ENCODE measurements at regions of chr14 and their contacts with region 1.

Region 1: DNA sequence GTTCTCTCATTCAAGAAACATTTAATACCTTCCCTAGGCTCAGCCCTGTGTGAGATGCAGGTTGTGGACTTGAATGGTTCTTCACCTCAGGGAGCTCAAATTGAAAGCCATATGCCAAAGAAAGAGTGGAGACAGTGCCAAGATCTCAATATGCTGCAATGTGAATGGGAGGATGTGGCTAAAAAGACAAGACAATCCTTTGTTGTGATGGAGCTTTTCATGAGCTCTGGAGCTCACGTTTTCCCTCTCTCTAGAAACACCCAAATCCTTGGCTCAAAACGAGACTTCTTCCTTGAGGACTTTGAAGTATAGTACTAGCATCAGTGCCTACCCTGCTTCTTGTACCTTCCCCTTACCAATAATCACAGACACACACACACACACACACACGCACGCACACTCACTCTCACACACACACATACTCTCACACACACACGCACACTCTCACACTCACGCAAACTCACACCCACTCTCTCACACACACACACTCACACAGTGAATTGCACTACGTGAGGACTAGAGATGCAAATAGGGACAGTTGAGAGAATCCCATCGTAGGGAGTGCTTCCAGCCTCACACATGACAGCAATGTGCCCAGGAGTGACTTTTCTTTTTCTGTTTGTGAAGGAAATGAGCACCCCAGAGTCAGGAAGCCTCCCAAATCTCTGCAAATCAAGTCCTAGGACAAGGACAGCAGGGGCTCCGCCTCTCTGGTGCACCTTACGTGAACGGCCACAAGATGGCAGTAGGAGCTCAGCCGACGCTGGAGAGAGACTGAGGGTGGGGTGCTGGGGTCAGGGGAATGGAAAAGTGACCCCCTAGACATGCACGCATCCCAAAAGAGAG is 231.4 kb downstream of the PCNX1 start:
- DNase-seq: peak; percentile 20 to 64 (median 46)
- ATAC-seq: peak; percentile 72
- H3K4me3 ChIP-seq: no peak overlapping the region
- H3K4me3 Mint-ChIP-seq: no peak overlapping the region
- H3K27ac ChIP-seq: no peak overlapping the region
- H3K27ac Mint-ChIP-seq: peak overlapping the region in 2 of 9 donors; percentile 1 to 36
- H3K4me1 ChIP-seq: peaks cover 7 to 20% of the 10 kb centered on the region in 2 donors
- H3K4me1 Mint-ChIP-seq: peaks cover 0 to 54% (median 6%) of the 10 kb centered on the region in 7 donors
- H3K27me3 ChIP-seq: no peaks in the 10 kb centered on the region
- H3K27me3 Mint-ChIP-seq: peaks cover 0 to 3% (median 0%) of the 10 kb centered on the region in 5 donors

Region 2: GRCh38 chr14:71231521-71232393 is 93.1 kb after region 1 on chr14:
- CTCF ChIA-PET with region 1: no interaction called
- POLR2A ChIA-PET with region 1: no interaction called
- intact Hi-C with region 1: no loop called
- DNase-seq: no peak
- ATAC-seq: peak; percentile 45
- H3K4me3 ChIP-seq: no peak overlapping the region
- H3K4me3 Mint-ChIP-seq: no peak overlapping the region
- H3K27ac ChIP-seq: no peak overlapping the region
- H3K27ac Mint-ChIP-seq: peak overlapping the region in 2 of 9 donors; percentile 2 to 9
- H3K4me1 ChIP-seq: no peaks in the 10 kb centered on the region
- H3K4me1 Mint-ChIP-seq: peaks cover 0 to 8% (median 0%) of the 10 kb centered on the region in 7 donors
- H3K27me3 ChIP-seq: no peaks in the 10 kb centered on the region
- H3K27me3 Mint-ChIP-seq: peaks cover 0 to 4% (median 4%) of the 10 kb centered on the region in 5 donors

Region 3: DNA sequence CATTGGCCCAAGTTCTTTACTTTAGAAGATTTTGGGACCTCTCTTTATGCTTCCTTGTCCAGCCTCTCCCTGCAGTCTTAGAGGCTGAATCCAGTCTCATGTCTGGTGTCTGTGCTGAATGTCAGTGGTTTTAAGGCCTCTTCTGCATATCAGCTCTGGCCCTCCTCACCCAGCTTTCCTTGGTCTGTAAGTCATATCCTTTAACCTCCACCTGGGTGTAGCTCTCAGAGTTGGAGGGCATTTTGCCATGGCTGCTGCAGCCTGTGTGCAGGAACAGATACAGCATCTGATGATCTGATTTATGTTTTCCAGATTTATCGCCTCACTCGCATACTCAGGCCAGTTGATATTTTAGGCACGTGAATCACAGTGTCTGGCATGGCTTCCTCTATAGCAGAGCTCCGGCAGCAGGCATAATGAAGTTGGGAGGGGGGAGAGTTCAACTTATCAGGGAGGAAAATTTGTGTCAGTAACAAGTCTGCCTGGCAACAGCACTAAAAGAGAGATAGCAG is 103.6 kb after region 1 on chr14:
- CTCF ChIA-PET with region 1: no interaction called
- POLR2A ChIA-PET with region 1: no interaction called
- intact Hi-C with region 1: loop called in 1 of 2 experiments (anchors 10 kb)
- DNase-seq: no peak
- ATAC-seq: no peak
- H3K4me3 ChIP-seq: no peak overlapping the region
- H3K4me3 Mint-ChIP-seq: no peak overlapping the region
- H3K27ac ChIP-seq: no peak overlapping the region
- H3K27ac Mint-ChIP-seq: peak overlapping the region in 2 of 9 donors; percentile 26 to 65
- H3K4me1 ChIP-seq: peaks cover 19 to 20% of the 10 kb centered on the region in 2 donors
- H3K4me1 Mint-ChIP-seq: peaks cover 19 to 52% (median 19%) of the 10 kb centered on the region in 7 donors
- H3K27me3 ChIP-seq: no peaks in the 10 kb centered on the region
- H3K27me3 Mint-ChIP-seq: peaks cover 0 to 4% (median 0%) of the 10 kb centered on the region in 5 donors

Region 4: DNA sequence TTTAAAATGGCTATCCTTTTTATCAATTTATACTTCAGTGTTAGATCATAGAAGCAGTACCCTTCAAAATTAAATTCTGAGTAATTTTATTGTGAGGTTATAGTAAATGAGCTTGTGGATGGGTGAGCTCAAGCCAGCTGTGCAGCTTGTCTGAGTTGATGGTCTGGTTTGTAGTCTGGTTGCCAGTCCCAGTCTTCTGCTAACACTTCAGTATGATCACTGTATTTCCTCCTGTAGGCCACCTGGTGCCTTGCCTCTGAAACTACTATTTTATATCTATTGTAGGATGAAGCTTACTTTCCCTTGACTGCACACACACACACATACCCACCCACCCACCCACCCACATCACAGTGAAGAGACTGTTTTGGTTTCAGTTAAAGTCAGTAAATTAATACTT is 265.0 kb after region 1 on chr14:
- CTCF ChIA-PET with region 1: interaction called, 3 read pairs
- POLR2A ChIA-PET with region 1: no interaction called
- intact Hi-C with region 1: loop called (anchors 1 to 10 kb)
- DNase-seq: peak in 7 of 9 donors; percentile 31 to 64 (median 44)
- ATAC-seq: peak; percentile 51
- H3K4me3 ChIP-seq: no peak overlapping the region
- H3K4me3 Mint-ChIP-seq: no peak overlapping the region
- H3K27ac ChIP-seq: no peak overlapping the region
- H3K27ac Mint-ChIP-seq: peak overlapping the region in 6 of 9 donors; percentile 33 to 74 (median 56)
- H3K4me1 ChIP-seq: peaks cover 0 to 15% of the 10 kb centered on the region in 2 donors
- H3K4me1 Mint-ChIP-seq: peaks cover 17 to 47% (median 34%) of the 10 kb centered on the region in 7 donors
- H3K27me3 ChIP-seq: no peaks in the 10 kb centered on the region
- H3K27me3 Mint-ChIP-seq: no peaks in the 10 kb centered on the region

Region 5: GRCh38 chr14:71478542-71478941 is 339.9 kb after region 1 on chr14:
- CTCF ChIA-PET with region 1: interaction called, 3 read pairs
- POLR2A ChIA-PET with region 1: no interaction called
- intact Hi-C with region 1: loop called in 1 of 2 experiments (anchors 5 kb)
- DNase-seq: peak in 3 of 9 donors; percentile 1 to 8 (median 2)
- ATAC-seq: peak; percentile 65
- H3K4me3 ChIP-seq: no peak overlapping the region
- H3K4me3 Mint-ChIP-seq: peak overlapping the region in 3 of 10 donors; percentile 2 to 58 (median 7)
- H3K27ac ChIP-seq: no peak overlapping the region
- H3K27ac Mint-ChIP-seq: peak overlapping the region in 3 of 9 donors; percentile 6 to 44 (median 16)
- H3K4me1 ChIP-seq: no peaks in the 10 kb centered on the region
- H3K4me1 Mint-ChIP-seq: peaks cover 7 to 51% (median 43%) of the 10 kb centered on the region in 7 donors
- H3K27me3 ChIP-seq: no peaks in the 10 kb centered on the region
- H3K27me3 Mint-ChIP-seq: no peaks in the 10 kb centered on the region

Region 6: DNA sequence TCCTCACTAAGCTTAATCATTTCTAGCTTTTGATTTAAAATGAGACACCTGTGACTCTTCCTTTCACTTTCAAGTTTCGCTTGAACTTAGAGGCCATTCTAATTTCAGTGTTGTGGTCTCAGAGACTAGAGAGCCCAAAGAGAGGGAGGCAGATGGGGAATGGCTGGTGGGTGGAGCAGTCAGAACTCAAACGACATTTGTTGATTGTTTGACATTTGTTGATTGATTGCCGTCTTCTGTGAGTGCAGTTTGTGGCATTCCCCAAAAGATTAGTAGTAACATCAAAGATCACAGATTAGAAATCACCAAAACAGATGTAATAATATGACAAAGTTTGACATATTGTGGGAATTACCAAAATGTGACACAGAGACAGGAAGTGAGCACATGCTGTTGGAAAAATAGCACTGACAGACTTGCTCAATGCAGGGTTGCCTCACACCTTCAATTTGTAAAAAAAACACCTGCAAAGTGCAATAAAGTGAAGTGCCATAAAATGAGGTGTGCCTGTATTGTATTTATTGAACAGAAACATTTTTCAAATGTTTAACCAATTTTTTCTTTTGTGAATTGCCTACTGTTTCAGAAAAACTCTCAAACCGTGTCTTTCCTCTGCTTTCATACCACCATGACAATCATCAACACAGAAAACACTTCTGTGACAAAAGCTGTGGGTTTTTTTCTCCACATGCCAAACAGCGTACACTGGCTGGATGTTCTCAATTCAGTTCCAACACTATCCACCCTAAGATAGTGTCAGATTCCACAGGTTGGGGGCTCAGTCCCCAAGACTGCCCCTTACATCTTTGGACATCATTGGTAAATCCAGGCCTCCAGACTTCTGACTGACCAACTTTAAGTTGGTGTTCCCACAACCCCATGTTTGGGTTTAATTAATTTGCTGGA is 417.2 kb after region 1 on chr14:
- CTCF ChIA-PET with region 1: no interaction called
- POLR2A ChIA-PET with region 1: no interaction called
- intact Hi-C with region 1: loop called in 1 of 2 experiments (anchors 1 kb)
- DNase-seq: peak; percentile 8 to 81 (median 54)
- ATAC-seq: peak; percentile 92
- H3K4me3 ChIP-seq: peak overlapping the region; percentile 43
- H3K4me3 Mint-ChIP-seq: peak overlapping the region; percentile 70 to 88 (median 82)
- H3K27ac ChIP-seq: peak overlapping the region; percentile 82
- H3K27ac Mint-ChIP-seq: peak overlapping the region; percentile 91 to 99 (median 94)
- H3K4me1 ChIP-seq: peaks cover 30 to 43% of the 10 kb centered on the region in 2 donors
- H3K4me1 Mint-ChIP-seq: peaks cover 37 to 85% (median 68%) of the 10 kb centered on the region in 7 donors
- H3K27me3 ChIP-seq: no peaks in the 10 kb centered on the region
- H3K27me3 Mint-ChIP-seq: no peaks in the 10 kb centered on the region

Region 7: DNA sequence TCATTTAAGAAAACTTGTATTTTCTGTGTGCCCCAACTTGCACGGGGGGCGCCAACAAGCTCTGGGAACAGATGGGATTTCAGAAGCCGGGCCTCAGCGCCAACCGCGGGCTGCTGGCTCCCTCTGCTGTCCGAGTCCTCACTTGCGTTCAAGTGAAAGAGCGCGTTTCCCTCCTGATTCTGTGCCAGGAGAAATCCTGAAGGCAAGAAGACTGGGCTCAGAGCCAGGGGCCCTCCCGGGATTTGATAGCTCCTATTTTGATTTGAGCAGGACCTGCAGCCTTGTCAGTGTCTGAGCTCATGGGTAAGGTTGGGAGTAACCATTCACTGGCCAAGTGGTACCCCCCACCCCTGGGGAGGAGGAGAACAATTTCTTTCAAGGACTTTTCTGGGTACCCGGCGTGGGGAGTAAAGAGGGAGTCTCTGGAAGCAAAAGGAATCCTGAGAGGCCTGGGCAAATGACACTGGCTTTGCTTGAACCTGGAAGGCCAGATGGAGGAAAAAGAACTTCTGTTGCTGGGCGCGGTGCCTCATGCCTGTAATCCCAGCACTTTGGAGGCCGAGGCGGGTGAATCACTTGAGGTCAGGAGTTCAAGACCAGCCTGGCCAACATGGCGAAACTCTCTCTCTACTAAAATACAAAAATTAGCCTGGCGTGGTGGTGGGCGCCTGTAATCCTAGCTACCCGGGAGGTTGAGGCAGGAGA is 614.6 kb after region 1 on chr14:
- CTCF ChIA-PET with region 1: interaction called, 70 read pairs
- POLR2A ChIA-PET with region 1: interaction called, 3 read pairs
- intact Hi-C with region 1: loop called (anchors 1 kb)
- DNase-seq: peak; percentile 29 to 67 (median 57)
- ATAC-seq: peak; percentile 66
- H3K4me3 ChIP-seq: no peak overlapping the region
- H3K4me3 Mint-ChIP-seq: peak overlapping the region in 3 of 10 donors; percentile 3 to 34 (median 21)
- H3K27ac ChIP-seq: no peak overlapping the region
- H3K27ac Mint-ChIP-seq: no peak overlapping the region
- H3K4me1 ChIP-seq: no peaks in the 10 kb centered on the region
- H3K4me1 Mint-ChIP-seq: peaks cover 0 to 18% (median 0%) of the 10 kb centered on the region in 7 donors
- H3K27me3 ChIP-seq: no peaks in the 10 kb centered on the region
- H3K27me3 Mint-ChIP-seq: peaks cover 0 to 5% (median 0%) of the 10 kb centered on the region in 5 donors

Region 8: GRCh38 chr14:71855399-71856036 is 716.8 kb after region 1 on chr14:
- CTCF ChIA-PET with region 1: interaction called, 5 read pairs
- POLR2A ChIA-PET with region 1: no interaction called
- intact Hi-C with region 1: loop called in 1 of 2 experiments (anchors 5 kb)
- DNase-seq: peak in 3 of 9 donors; percentile 1 to 58 (median 3)
- ATAC-seq: no peak
- H3K4me3 ChIP-seq: no peak overlapping the region
- H3K4me3 Mint-ChIP-seq: no peak overlapping the region
- H3K27ac ChIP-seq: no peak overlapping the region
- H3K27ac Mint-ChIP-seq: no peak overlapping the region
- H3K4me1 ChIP-seq: no peaks in the 10 kb centered on the region
- H3K4me1 Mint-ChIP-seq: peaks cover 0 to 14% (median 0%) of the 10 kb centered on the region in 7 donors
- H3K27me3 ChIP-seq: peaks cover 0 to 3% of the 10 kb centered on the region in 2 donors
- H3K27me3 Mint-ChIP-seq: peaks cover 30 to 70% (median 48%) of the 10 kb centered on the region in 5 donors

Measured in naive thymus-derived CD4-positive, alpha-beta T cell (primary cell).